ENCODE measurements at regions of chr17 and their contacts with region 1.

Region 1: DNA sequence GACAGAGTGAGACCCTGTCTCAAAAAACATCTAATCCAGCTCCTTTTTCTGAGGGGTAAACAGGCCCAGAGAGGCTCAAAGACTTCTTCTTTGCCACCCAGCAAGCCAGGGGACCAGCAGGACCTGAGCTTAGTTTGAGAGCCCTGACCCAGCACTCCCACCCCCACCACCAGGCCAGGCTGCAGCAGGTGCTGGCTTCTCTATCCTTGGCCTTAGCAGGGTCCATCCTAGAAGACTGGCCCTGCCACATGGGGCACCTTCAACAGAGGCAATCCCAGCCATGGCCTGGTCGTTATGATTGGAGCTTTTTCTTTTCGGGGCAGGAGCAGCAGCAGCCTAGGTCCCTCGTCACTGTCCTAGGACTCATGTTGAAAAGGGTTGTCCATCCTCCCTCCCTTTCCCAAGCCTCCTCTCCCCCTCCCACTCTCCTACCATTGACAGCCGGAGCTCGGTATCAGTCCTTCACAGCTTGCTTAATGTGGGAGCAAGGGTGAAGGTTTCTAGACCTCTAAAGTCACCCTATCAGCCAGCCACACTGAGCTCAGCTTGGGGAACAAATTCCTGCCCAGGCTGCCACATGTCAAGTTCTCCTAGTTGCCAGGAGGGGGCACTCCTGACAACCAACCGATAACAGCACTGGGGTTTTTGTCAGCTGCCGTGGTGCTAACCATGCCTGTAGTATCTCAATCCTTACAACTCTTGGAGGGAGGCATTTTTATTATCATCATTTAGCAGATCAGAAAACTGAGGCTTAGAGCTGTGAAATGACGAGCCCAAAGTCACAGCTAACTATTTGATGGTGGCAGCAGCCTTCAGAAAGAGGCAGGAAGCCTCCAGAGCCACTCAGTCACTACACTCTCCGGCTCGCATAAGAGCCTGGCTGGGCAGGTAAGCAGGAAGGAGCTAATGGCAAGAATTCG is 11.2 kb downstream of the MRPL27 start:
- DNase-seq: peak; percentile 79
- ATAC-seq: peak; percentile 75
- H3K4me3 ChIP-seq: no peak overlapping the region
- H3K27ac ChIP-seq: no peak overlapping the region
- H3K4me1 ChIP-seq: no peaks in the 10 kb centered on the region
- H3K27me3 ChIP-seq: no peaks in the 10 kb centered on the region
- CTCF ChIP-seq: peak; percentile 92

Region 2: DNA sequence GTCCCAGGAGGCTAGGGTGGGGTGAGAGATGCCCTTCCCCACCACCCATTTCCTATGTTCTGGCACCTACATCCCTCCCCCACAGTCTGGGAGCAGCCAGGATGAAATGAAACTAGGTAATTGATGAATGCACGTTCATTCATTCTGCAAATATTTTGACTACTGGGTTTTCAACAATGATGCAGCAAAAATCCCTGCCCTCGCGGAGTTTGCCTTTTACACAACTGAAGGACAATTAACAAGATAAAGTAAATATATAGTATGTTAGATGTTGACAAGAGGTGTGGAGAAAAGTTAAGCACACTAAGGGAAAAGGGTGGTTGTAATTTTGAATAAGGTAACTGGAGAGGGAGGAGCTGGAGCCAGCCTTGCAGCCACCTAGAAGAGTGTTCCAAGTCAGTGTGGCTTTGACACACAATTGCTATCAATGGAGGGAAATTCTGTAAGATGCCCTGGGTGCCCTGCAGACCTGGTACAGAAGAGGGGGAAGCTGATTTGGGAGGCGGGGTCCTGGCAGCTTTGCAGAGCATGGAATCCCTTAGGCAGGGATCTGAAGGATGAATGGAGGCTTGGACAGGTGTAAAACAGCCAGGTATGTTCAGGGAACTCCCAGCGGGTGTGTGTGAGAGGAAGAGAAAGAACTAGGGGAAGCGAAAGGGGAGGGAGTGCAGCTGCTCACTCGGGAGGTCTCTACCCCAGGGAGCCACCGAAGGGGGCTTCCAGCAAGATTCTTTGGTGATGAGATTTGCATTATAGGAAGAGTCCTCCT is 85.0 kb before region 1 on chr17:
- CTCF ChIA-PET with region 1: interaction called, 12 read pairs
- POLR2A ChIA-PET with region 1: no interaction called
- intact Hi-C with region 1: no loop called
- DNase-seq: peak; percentile 55
- ATAC-seq: no peak
- H3K4me3 ChIP-seq: peak overlapping the region; percentile 48
- H3K27ac ChIP-seq: peak overlapping the region; percentile 63
- H3K4me1 ChIP-seq: peaks cover 65% of the 10 kb centered on the region
- H3K27me3 ChIP-seq: no peaks in the 10 kb centered on the region
- CTCF ChIP-seq: no peak

Region 3: GRCh38 chr17:50345432-50346312 is 16.1 kb before region 1 on chr17 and contains the start of gene XYLT2:
- CTCF ChIA-PET with region 1: interaction called, 25 read pairs
- POLR2A ChIA-PET with region 1: no interaction called
- intact Hi-C with region 1: no loop called
- DNase-seq: peak; percentile 93
- ATAC-seq: peak; percentile 83
- H3K4me3 ChIP-seq: peak within 1 kb of the TSS; percentile 95
- H3K27ac ChIP-seq: no peak within 1 kb of the TSS
- H3K4me1 ChIP-seq: peaks cover 26% of the 10 kb centered on the region
- H3K27me3 ChIP-seq: no peaks in the 10 kb centered on the region
- CTCF ChIP-seq: no peak
- total RNA-seq, gene XYLT2: 53.5 and 54.3 TPM in 2 replicates

Region 4: DNA sequence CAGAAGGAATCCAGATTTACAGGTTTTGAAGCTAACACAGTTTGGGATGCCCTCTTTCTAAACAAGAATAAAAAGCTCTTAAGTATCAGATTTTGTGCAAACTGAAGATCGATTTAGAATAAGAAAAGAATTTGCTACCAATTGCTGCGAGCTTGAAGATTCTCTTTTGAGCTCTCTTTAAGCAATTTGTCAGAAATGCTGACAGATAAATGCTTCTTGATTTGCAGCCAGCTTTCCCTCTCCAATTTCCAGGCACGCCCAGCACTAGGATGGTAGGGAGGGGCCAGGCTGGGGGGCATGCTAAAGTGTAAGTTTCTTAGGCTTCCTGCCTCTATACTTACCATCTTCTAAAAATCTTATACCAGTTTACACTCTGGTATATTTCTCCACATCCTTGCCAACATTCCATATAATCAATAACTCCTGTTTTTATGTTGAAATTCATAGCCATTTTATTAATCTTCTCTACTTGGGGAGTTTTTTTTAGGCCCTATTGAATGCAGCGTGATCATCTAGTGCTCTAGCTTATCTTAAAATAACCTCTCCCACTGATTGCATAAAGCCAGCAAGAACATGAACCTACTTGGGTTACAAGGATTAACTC is 81.6 kb after region 1 on chr17:
- CTCF ChIA-PET with region 1: no interaction called
- POLR2A ChIA-PET with region 1: interaction called, 22 read pairs
- intact Hi-C with region 1: no loop called
- DNase-seq: peak; percentile 86
- ATAC-seq: peak; percentile 52
- H3K4me3 ChIP-seq: peak overlapping the region; percentile 2; the same call in 1 of the 2 replicates
- H3K27ac ChIP-seq: no peak overlapping the region
- H3K4me1 ChIP-seq: peaks cover 29% of the 10 kb centered on the region
- H3K27me3 ChIP-seq: no peaks in the 10 kb centered on the region
- CTCF ChIP-seq: no peak

Measured in PC-3 (cell line).